ENCODE measurements at regions of chr22 and their contacts with region 1.

Region 1: GRCh38 chr22:24848559-24849168 is 42.7 kb downstream of the SGSM1 start:
- DNase-seq: no peak
- H3K4me3 ChIP-seq: no peak overlapping the region
- H3K27ac ChIP-seq: no peak overlapping the region
- H3K4me1 ChIP-seq: peaks cover 0 to 6% (median 4%) of the 10 kb centered on the region in 4 experiments
- H3K27me3 ChIP-seq: peaks cover 0 to 9% (median 0%) of the 10 kb centered on the region in 5 experiments

Region 2: DNA sequence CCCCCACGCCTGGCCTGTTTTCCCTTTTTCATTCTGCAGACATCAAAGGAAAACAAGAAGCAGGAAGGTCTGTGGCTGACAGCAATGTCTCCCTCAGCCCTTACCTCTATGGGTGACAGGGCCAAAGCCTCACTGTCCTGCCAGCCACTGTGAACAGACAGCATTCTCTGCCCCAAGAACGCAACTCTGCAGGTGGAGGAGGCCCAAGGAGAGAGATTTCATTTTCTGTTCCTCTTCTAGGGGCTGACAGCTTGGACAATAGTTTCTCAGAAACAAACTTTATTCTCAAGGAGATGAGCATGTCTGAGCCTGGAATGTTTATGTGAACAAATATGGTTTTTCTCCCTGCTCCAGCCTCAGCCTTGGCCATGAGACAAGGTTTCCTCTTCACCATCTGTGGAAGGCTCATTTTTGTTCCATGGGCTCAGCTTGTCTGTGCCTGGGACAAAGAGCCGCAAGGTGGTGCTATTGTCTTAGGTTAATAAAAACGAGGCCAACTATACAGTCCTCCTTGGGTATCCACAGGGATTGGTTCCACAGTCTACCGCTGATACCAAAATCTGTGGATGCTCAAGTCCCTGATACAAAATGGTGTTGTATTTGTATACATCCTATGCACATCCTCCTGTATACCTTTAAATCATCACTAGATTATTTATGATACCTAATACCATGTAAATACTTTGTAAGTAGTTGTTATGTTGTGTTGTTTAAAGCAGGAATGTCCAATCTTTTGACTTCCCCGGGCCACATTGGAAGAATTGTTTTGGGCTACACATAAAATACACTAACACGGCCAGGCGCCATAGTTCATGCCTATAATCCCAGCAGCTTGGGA is 79.9 kb before region 1 on chr22:
- CTCF ChIA-PET with region 1: interaction called, 61 read pairs
- POLR2A ChIA-PET with region 1: no interaction called
- DNase-seq: peak; percentile 34 to 73 (median 55)
- H3K4me3 ChIP-seq: no peak overlapping the region
- H3K27ac ChIP-seq: no peak overlapping the region
- H3K4me1 ChIP-seq: peaks cover 0 to 2% (median under 1%) of the 10 kb centered on the region in 4 experiments
- H3K27me3 ChIP-seq: peaks cover 0 to 3% (median 1%) of the 10 kb centered on the region in 5 experiments

Region 3: DNA sequence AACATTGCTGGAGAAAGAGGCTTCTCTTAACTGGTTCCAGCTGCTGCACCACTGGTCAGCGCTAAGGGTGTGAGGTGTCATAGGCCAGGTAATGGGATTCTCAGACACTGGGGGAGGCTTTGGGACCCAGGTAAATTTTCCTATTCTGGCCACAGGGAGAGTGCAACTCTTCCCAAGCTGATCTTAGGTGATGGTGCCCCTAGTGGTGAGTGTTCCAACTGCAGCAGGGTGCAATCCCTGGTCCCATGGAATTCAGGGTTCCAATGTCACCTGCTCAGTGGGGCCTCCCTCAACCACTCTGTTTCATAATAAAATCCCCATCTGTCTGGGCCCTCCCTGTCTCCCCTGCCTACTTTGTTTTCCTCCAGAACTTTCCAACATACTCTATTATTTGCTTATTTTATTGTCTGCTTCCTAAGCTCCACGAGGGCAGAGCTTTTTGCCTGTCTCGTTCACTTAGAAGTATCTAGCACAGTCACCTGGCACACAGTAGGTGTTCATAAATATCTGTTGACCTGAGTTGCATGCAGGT is 45.6 kb before region 1 on chr22:
- CTCF ChIA-PET with region 1: interaction called, 10 read pairs
- POLR2A ChIA-PET with region 1: no interaction called
- DNase-seq: peak; percentile 28 to 54 (median 42)
- H3K4me3 ChIP-seq: no peak overlapping the region
- H3K27ac ChIP-seq: no peak overlapping the region
- H3K4me1 ChIP-seq: peaks cover 0 to 7% (median 4%) of the 10 kb centered on the region in 4 experiments
- H3K27me3 ChIP-seq: peaks cover 0 to 5% (median 0%) of the 10 kb centered on the region in 5 experiments

Region 4: DNA sequence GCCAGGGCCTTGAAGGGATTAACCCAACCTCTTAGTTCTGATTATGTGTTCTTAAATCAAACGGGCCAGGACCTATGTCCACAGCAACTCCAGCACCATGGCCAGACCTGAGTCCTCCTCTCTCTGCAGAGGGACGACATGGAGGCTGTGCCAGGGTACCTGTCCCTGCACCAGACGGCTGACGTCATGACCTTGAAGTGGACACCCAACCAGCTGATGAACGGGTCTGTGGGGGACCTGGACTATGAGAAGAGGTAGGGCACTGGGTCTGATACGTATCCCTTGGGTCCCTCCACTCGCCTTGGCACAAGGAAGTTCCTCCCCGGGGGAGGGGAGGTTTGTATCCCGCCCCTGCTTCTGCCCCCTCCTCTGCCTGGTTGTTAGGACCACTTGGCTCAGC is 10.9 kb after region 1 on chr22:
- CTCF ChIA-PET with region 1: no interaction called
- POLR2A ChIA-PET with region 1: no interaction called
- DNase-seq: no peak
- H3K4me3 ChIP-seq: no peak overlapping the region
- H3K27ac ChIP-seq: no peak overlapping the region
- H3K4me1 ChIP-seq: no peaks in the 10 kb centered on the region
- H3K27me3 ChIP-seq: no peaks in the 10 kb centered on the region

Measured in common myeloid progenitor, CD34-positive (primary cell).